Activated CD4-positive, alpha-beta memory T cell treated with anti-CD3 and anti-CD28 coated beads for 36 hours (primary cell): ENCODE measurements at regions of chr5 and their contacts with region 1.

Region 1: DNA sequence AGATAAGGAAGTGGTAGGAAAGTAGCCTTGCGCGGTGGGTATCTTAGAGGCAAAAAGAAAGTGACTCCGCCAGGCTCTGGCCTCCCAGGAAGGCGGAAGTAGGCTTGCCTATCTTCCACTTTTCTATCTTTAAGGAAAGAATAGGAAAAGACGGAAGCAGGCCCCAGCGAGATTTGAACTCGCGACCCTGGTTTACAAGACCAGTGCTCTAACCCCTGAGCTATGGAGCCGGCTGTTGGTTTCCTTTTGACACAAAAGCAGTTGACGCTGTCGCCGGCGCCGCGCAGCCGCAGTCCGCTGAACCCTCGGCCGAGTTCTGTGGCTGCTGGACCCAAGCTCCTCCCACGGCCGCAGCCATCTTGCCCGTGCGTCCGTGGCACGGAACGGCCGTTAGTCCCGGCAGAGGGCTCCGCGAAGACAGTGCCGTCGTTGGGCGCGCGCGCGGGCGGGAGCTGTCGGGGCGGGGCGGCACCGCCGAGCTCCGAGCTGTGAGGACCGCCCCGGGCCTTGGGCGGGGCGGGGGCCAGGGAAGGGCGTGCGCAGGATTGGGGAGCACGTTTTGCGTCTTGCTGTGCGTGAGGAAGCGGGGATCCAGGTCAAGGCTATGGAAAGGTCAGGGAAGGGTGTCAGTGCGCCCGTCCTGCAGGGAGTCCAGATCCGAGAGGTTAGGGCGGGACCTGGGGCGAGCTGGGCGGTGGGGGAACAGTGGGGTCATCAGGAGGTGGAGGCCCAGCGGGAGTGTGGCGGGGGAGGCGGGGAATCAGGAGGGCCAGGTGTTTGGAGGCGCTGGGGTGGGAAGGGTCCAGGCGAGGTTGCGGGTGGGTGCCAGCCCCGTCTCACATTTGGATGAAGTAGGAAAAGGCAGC is 13.2 kb downstream of the TRIM7 start:
- DNase-seq: peak; percentile 98
- H3K4me3 Mint-ChIP-seq: peak overlapping the region; percentile 80
- H3K27ac Mint-ChIP-seq: peak overlapping the region; percentile 87
- H3K4me1 Mint-ChIP-seq: peaks cover 31% of the 10 kb centered on the region
- H3K27me3 Mint-ChIP-seq: peaks cover 11% of the 10 kb centered on the region

Region 2: DNA sequence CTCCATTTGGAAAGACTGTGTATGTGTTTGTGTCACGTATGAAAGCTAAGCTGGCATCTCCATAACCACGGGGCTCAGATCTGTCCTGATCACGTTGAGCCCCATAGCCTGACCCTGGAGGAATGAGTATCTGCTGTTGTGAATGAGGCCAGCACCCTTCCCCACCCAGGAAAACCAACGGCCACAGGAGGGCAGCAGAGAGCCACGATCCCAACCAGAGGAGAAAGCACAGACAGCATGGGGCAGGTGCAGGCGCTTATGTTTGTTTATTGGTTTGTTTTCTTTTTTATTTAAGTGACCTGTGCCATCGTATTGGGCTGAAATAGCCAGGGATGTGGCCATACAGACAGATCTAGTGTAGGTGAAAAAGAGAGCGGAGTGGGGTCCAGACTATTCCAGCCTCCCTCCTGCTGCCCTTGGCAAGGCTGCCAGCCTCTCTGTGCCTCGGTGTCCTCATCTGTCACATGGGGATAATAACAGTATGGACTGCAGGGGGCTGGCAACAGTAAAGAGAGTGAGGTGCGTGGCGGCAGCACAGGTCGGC is 32.4 kb before region 1 on chr5:
- CTCF ChIA-PET with region 1: interaction called, 5 read pairs
- POLR2A ChIA-PET with region 1: interaction called, 4 read pairs
- intact Hi-C with region 1: loop called (anchors 2 kb)
- DNase-seq: peak; percentile 96
- H3K4me3 Mint-ChIP-seq: peak overlapping the region; percentile 36
- H3K27ac Mint-ChIP-seq: peak overlapping the region; percentile 72
- H3K4me1 Mint-ChIP-seq: peaks cover 33% of the 10 kb centered on the region
- H3K27me3 Mint-ChIP-seq: peaks cover 17% of the 10 kb centered on the region

Region 3: GRCh38 chr5:181207214-181208107 is 15.7 kb after region 1 on chr5:
- CTCF ChIA-PET with region 1: interaction called, 32 read pairs
- POLR2A ChIA-PET with region 1: interaction called, 37 read pairs
- intact Hi-C with region 1: loop called (anchors 1 kb)
- DNase-seq: peak; percentile 90
- H3K4me3 Mint-ChIP-seq: peak overlapping the region; percentile 86
- H3K27ac Mint-ChIP-seq: peak overlapping the region; percentile 93
- H3K4me1 Mint-ChIP-seq: peaks cover 27% of the 10 kb centered on the region
- H3K27me3 Mint-ChIP-seq: peaks cover 17% of the 10 kb centered on the region

Region 4: DNA sequence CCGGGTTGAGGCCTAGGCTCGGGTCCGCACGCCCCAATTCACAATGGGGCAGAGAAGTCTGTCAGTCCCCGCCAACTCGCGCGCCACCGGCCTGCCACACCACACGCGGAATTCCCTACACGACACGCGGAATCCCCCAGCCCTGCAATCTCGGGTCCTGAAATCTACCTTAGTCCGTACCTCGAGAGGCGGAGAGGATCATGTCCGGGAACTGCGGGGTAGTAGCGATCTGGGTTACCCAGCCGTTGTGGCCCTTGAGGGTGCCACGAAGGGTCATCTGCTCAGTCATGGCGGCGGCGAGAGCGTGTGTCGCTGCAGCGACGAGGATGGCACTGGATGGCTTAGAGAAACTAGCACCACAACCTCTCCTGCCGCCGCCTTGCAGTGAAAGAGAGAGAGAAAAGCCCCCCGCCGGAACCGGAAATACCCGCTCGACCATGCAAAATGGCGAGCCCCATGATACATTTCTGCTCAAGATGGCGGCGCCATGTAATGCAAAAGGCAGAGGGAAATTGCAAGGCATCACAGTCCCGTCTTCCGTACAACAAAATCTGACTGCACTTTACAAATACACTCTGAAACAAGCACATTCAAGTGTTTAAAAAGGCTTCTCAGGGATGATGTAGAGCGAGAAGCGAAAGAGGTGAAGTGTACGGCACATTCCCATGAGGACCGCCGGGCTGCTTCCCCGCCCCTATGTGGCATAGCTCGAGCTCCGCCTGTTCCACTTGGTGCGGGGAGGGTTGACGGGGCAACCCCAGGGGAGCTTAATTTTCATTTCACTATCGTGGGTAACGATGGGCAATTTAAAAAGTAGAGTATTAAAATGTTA is 52.0 kb after region 1 on chr5 and contains the start of gene RACK1:
- CTCF ChIA-PET with region 1: interaction called, 4 read pairs
- POLR2A ChIA-PET with region 1: interaction called, 8 read pairs
- intact Hi-C with region 1: loop called (anchors 1 kb)
- DNase-seq: peak; percentile 93
- H3K4me3 Mint-ChIP-seq: peak within 1 kb of the TSS; percentile 98
- H3K27ac Mint-ChIP-seq: peak within 1 kb of the TSS; percentile 99
- H3K4me1 Mint-ChIP-seq: peaks cover 51% of the 10 kb centered on the region
- H3K27me3 Mint-ChIP-seq: no peaks in the 10 kb centered on the region
- total RNA-seq, gene RACK1: 2,635 to 2,697 TPM